CD4-positive, alpha-beta memory T cell (primary cell): ENCODE measurements at regions of chr19 and their contacts with region 1.

Region 1: DNA sequence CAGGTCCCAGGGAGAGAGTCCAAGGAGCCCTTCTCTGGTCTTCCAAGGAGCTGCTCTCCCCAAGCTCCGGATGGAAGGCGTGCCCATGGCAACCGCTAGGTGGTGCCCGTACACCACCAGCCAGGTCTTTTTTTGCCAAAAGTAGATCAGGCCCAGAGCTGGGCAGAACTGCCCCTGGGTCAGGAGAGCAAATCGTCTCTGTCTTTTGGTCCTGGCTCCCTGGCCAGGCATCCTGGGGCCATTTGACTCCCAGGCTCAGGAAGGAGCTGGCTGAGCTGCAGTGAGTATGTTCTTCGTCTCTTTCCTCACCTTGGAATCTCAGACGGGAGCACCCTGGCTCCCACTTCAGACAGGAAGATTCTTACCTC is 24.6 kb upstream of the BCL3 start:
- DNase-seq: peak; percentile 73 to 83 (median 74)
- H3K4me3 ChIP-seq: no peak overlapping the region
- H3K4me3 Mint-ChIP-seq: no peak overlapping the region
- H3K27ac ChIP-seq: no peak overlapping the region
- H3K27ac Mint-ChIP-seq: peak overlapping the region in 3 of 7 donors; percentile 13 to 77 (median 60)
- H3K4me1 ChIP-seq: peaks cover 15% of the 10 kb centered on the region
- H3K4me1 Mint-ChIP-seq: peaks cover 11 to 24% (median 14%) of the 10 kb centered on the region in 4 donors
- H3K27me3 ChIP-seq: no peaks in the 10 kb centered on the region
- H3K27me3 Mint-ChIP-seq: no peaks in the 10 kb centered on the region

Region 2: GRCh38 chr19:44635581-44636438 is 88.1 kb before region 1 on chr19:
- CTCF ChIA-PET with region 1: no interaction called
- POLR2A ChIA-PET with region 1: no interaction called
- intact Hi-C with region 1: no loop called
- DNase-seq: no peak
- H3K4me3 ChIP-seq: no peak overlapping the region
- H3K4me3 Mint-ChIP-seq: no peak overlapping the region
- H3K27ac ChIP-seq: no peak overlapping the region
- H3K27ac Mint-ChIP-seq: no peak overlapping the region
- H3K4me1 ChIP-seq: no peaks in the 10 kb centered on the region
- H3K4me1 Mint-ChIP-seq: no peaks in the 10 kb centered on the region
- H3K27me3 ChIP-seq: no peaks in the 10 kb centered on the region
- H3K27me3 Mint-ChIP-seq: peaks cover 13 to 14% of the 10 kb centered on the region in 2 donors

Region 3: GRCh38 chr19:44648402-44649251 is 75.3 kb before region 1 on chr19:
- CTCF ChIA-PET with region 1: no interaction called
- POLR2A ChIA-PET with region 1: no interaction called
- intact Hi-C with region 1: no loop called
- DNase-seq: no peak
- H3K4me3 ChIP-seq: no peak overlapping the region
- H3K4me3 Mint-ChIP-seq: no peak overlapping the region
- H3K27ac ChIP-seq: no peak overlapping the region
- H3K27ac Mint-ChIP-seq: peak overlapping the region in 1 of 7 donors; percentile 36
- H3K4me1 ChIP-seq: peaks cover 6% of the 10 kb centered on the region
- H3K4me1 Mint-ChIP-seq: peaks cover 0 to 6% (median 0%) of the 10 kb centered on the region in 4 donors
- H3K27me3 ChIP-seq: no peaks in the 10 kb centered on the region
- H3K27me3 Mint-ChIP-seq: peaks cover 5 to 11% of the 10 kb centered on the region in 2 donors

Region 4: GRCh38 chr19:44689056-44689895 is 34.7 kb before region 1 on chr19:
- CTCF ChIA-PET with region 1: interaction called, 88 read pairs
- POLR2A ChIA-PET with region 1: interaction called, 9 read pairs
- intact Hi-C with region 1: loop called (anchors 1 kb)
- DNase-seq: peak; percentile 66 to 71 (median 68)
- H3K4me3 ChIP-seq: no peak overlapping the region
- H3K4me3 Mint-ChIP-seq: no peak overlapping the region
- H3K27ac ChIP-seq: no peak overlapping the region
- H3K27ac Mint-ChIP-seq: peak overlapping the region in 6 of 7 donors; percentile 8 to 80 (median 58)
- H3K4me1 ChIP-seq: peaks cover 22% of the 10 kb centered on the region
- H3K4me1 Mint-ChIP-seq: peaks cover 20 to 33% (median 26%) of the 10 kb centered on the region in 4 donors
- H3K27me3 ChIP-seq: no peaks in the 10 kb centered on the region
- H3K27me3 Mint-ChIP-seq: peaks cover 8 to 18% of the 10 kb centered on the region in 2 donors

Region 5: GRCh38 chr19:44741841-44742352 is 18.0 kb after region 1 on chr19:
- CTCF ChIA-PET with region 1: interaction called, 20 read pairs
- POLR2A ChIA-PET with region 1: interaction called, 3 read pairs
- intact Hi-C with region 1: no loop called
- DNase-seq: peak in 1 of 5 donors; percentile 35
- H3K4me3 ChIP-seq: no peak overlapping the region
- H3K4me3 Mint-ChIP-seq: peak overlapping the region in 1 of 8 donors; percentile 20
- H3K27ac ChIP-seq: no peak overlapping the region
- H3K27ac Mint-ChIP-seq: peak overlapping the region in 2 of 7 donors; percentile 30 to 66
- H3K4me1 ChIP-seq: peaks cover 5% of the 10 kb centered on the region
- H3K4me1 Mint-ChIP-seq: peaks cover 7 to 23% (median 9%) of the 10 kb centered on the region in 4 donors
- H3K27me3 ChIP-seq: no peaks in the 10 kb centered on the region
- H3K27me3 Mint-ChIP-seq: no peaks in the 10 kb centered on the region

Region 6: GRCh38 chr19:44752816-44753618 is 29.1 kb after region 1 on chr19:
- CTCF ChIA-PET with region 1: interaction called, 41 read pairs
- POLR2A ChIA-PET with region 1: interaction called, 8 read pairs
- intact Hi-C with region 1: loop called (anchors 1 kb)
- DNase-seq: peak; percentile 95 to 98 (median 97)
- H3K4me3 ChIP-seq: peak overlapping the region; percentile 15 to 53
- H3K4me3 Mint-ChIP-seq: peak overlapping the region; percentile 89 to 96 (median 93)
- H3K27ac ChIP-seq: peak overlapping the region; percentile 95
- H3K27ac Mint-ChIP-seq: peak overlapping the region; percentile 97 to 100 (median 98)
- H3K4me1 ChIP-seq: peaks cover 68% of the 10 kb centered on the region
- H3K4me1 Mint-ChIP-seq: peaks cover 38 to 76% (median 54%) of the 10 kb centered on the region in 4 donors
- H3K27me3 ChIP-seq: no peaks in the 10 kb centered on the region
- H3K27me3 Mint-ChIP-seq: no peaks in the 10 kb centered on the region

Region 7: DNA sequence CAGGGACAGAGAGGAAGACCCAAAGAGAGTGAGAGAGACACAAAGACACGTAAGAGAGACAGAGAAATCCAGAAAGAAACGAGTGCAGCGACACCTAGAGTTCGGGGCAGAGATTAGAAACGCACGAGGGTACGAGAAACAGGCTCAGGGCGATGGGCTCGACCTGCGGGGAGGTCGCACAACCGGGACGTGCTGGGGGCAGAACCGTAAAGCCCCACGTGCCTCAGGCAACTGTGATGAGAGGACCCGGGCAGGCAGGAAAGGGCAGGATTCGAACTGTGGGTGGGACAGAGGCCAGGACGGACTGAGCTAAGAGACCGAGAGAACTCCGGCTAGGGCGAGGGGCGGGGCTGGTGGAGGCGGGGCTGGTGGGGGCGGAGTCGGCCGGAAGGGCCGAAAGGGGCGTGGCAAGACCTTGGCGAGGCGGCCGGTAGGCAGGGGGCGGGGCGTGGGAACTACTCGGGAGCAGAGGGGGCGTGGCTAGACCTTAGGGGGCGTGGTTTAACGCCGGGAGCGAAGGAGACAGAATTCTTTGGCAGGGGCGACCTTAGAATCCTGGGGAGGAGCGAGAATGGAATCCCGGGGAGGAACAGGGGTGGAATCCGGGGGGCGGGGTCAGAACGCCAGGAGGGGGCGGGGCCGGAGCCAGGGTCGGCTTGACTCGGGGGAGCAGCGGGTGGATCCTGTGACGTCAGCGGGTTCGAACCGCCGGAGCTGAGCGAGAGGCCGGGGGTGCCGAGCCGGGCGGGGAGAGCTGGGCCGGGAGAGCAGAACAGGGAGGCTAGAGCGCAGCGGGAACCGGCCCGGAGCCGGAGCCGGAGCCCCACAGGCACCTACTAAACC is 121.9 kb after region 1 on chr19 and contains the start of gene NECTIN2:
- CTCF ChIA-PET with region 1: interaction called, 8 read pairs
- POLR2A ChIA-PET with region 1: no interaction called
- intact Hi-C with region 1: loop called (anchors 1 kb)
- DNase-seq: peak; percentile 62 to 77 (median 70)
- H3K4me3 ChIP-seq: peak within 1 kb of the TSS; percentile 37 to 38
- H3K4me3 Mint-ChIP-seq: peak within 1 kb of the TSS; percentile 86 to 96 (median 90)
- H3K27ac ChIP-seq: peak within 1 kb of the TSS; percentile 14
- H3K27ac Mint-ChIP-seq: peak within 1 kb of the TSS; percentile 72 to 95 (median 87)
- H3K4me1 ChIP-seq: peaks cover 37% of the 10 kb centered on the region
- H3K4me1 Mint-ChIP-seq: peaks cover 13 to 36% (median 28%) of the 10 kb centered on the region in 4 donors
- H3K27me3 ChIP-seq: peaks cover 9% of the 10 kb centered on the region
- H3K27me3 Mint-ChIP-seq: peaks cover 5 to 7% of the 10 kb centered on the region in 2 donors
- total RNA-seq, gene NECTIN2: 0.84 to 1.7 TPM